ENCODE measurements at regions of chr10 and their contacts with region 1.

Region 1: DNA sequence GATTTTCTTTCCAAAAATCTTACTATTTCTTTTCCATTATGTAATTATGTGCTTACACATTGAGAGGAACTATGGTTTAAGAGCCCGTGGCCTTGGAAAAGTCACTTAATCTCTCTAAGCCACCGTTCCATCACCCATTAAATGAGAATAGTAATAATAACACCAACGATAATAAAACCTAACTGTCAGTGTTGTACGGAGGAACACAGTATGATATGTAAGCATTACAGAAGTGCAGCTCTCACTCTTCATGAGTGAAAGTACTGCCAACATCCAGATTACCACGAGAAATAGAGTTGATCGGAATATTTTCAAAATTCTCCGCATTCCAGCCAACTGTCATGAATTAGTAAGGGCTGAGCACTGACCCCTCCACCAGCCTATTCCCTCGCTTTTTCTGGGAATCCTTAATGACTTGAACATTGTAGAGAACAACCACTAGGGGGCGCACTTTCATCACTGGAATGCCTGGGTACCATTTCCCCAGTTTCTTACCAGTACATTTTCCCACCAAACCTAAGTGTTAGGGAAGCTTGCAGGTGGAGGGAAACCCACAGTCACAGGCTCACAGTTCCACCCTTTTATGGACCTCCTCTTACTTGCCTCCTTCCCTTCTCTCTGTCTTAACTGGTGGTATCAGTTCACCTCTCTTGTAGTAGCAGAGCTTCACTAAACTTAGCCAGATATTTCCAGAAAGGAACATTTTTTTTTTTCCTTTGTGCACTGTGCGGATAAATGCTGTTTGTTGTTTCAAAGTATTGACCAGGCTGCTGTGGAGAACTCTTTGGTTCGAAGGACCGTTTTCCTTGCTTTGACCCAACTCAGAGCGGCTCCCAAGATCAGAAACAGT is 27.8 kb downstream of the NKX2-3 start:
- DNase-seq: no peak
- ATAC-seq: peak; percentile 74
- H3K4me3 ChIP-seq: no peak overlapping the region
- H3K27ac ChIP-seq: no peak overlapping the region
- H3K4me1 ChIP-seq: no peaks in the 10 kb centered on the region
- H3K27me3 ChIP-seq: peaks cover 10% of the 10 kb centered on the region
- CTCF ChIP-seq: peak; percentile 67

Region 2: GRCh38 chr10:99619851-99620712 is 59.6 kb after region 1 on chr10 and contains the start of gene SLC25A28:
- intact Hi-C with region 1: loop called (anchors 10 kb)
- DNase-seq: peak; percentile 96
- ATAC-seq: peak; percentile 90
- H3K4me3 ChIP-seq: peak within 1 kb of the TSS; percentile 92
- H3K27ac ChIP-seq: peak within 1 kb of the TSS; percentile 99
- H3K4me1 ChIP-seq: peaks cover 31% of the 10 kb centered on the region
- H3K27me3 ChIP-seq: no peaks in the 10 kb centered on the region
- CTCF ChIP-seq: no peak
- total RNA-seq, gene SLC25A28: 47.4 TPM

Measured in upper lobe of right lung (tissue), 1 donor.